Cardiac septum (tissue), 1 donor: ENCODE measurements at regions of chr1 and their contacts with region 1.

Region 1: GRCh38 chr1:220527908-220528678 is at the start of gene MARK1:
- DNase-seq: peak; percentile 88
- total RNA-seq, gene MARK1: 22.0 TPM

Region 2: DNA sequence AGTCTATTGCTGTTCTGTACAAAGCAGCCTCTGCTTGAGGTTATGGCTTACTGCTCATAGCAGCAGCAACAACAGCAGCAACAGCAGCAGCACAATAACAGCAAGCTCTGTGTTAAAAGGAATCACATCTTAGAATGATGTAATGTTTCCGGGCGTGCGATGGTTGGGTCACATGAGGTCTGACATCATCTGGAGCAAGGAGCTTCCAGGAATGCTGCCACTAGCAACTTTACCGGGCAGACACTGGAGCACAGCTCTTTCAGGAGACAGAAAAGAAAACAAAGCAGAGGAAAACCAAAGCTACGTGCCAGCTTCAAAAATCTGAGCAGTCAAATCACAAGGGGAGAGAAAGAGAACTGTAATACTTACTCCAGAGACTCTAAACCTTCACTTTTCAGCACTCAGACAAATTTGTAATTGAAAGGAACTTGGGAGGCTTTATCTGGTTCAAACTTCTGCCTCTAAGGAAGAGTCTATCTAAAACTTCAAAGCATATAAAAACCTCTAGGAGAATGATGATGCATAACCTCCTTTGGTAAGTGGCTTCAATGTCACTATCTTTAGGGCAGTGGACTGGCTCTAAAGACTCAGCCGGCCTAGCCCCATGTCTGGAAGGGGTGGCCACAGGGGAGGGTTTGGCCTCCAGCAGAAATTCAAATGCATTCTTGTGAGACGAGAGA is 227.5 kb before region 1 on chr1:
- intact Hi-C with region 1: loop called (anchors 5 kb)
- DNase-seq: peak; percentile 85

Region 3: DNA sequence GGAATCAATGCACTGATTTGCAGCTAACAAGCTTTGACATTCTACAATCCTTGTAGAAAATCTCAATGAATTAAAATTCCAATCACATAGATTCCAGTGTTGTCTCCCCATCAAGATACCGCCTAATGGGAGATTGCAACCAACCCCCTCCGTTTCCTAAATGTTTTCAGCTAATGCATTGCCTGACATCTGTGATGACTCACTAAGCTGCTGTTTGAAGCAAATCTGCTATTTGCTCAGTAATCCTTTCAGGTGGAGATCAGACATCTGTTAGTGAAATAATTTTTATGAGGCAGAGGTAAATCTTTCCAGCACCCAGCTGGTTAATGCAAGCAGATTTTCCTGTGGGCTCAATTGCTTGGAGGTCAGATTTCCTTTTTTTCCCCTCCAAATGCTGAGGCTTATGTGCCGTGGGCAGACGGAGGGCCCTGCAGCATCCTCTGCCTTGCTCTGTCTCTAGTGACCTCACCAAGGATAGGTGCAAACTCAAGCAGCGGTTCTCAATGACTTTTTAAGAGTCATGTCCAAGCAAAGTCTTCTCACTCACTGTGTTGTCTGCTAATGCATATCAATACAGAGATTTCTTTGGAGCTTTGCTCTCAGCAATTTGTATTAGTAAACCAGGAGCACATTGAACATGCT is 164.8 kb before region 1 on chr1:
- intact Hi-C with region 1: no loop called
- DNase-seq: no peak

Region 4: DNA sequence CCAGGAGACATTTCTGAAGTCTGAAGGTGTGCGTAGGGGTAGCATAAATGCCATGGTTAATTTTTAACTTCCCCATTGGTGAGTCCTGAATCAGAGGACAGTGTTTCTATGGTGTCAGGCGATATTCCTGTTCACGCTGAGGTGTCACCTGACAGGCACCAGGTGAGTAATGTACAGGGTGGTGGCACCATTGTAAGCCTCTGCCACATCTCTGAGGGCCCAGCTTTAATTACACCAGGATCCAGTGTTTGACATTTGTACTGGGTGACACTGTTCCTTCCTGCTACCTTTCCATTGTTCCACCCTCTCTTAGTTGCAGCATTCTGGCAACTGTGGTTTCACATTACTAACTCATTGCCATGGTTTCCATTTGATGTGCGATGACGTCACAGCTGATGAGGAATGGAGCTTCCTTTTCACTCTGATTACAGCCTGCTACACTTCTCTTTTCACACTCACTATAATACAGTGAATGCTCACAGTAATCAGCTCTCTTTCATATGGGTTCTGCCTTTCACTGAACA is 40.7 kb before region 1 on chr1:
- intact Hi-C with region 1: no loop called
- DNase-seq: no peak

Region 5: GRCh38 chr1:220726634-220727033 is 198.5 kb after region 1 on chr1:
- intact Hi-C with region 1: no loop called
- DNase-seq: no peak

Region 6: GRCh38 chr1:220786337-220787068 is 258.4 kb after region 1 on chr1 and contains the start of gene MTARC1:
- intact Hi-C with region 1: loop called (anchors 2 kb)
- DNase-seq: peak; percentile 90
- total RNA-seq, gene MTARC1: 12.8 TPM